CD4-positive, alpha-beta memory T cell (primary cell): ENCODE measurements at regions of chr4 and their contacts with region 1.

Region 1: GRCh38 chr4:128553686-128554515 is 255.6 kb upstream of the JADE1 start:
- DNase-seq: no peak
- H3K4me3 ChIP-seq: peak overlapping the region; percentile 70 to 71
- H3K4me3 Mint-ChIP-seq: peak overlapping the region; percentile 97 to 99 (median 98)
- H3K27ac ChIP-seq: no peak overlapping the region
- H3K27ac Mint-ChIP-seq: peak overlapping the region in 5 of 7 donors; percentile 85 to 98 (median 94)
- H3K4me1 ChIP-seq: peaks cover 8% of the 10 kb centered on the region
- H3K4me1 Mint-ChIP-seq: peaks cover 10 to 17% (median 12%) of the 10 kb centered on the region in 4 donors
- H3K27me3 ChIP-seq: no peaks in the 10 kb centered on the region
- H3K27me3 Mint-ChIP-seq: peaks cover 3 to 7% of the 10 kb centered on the region in 2 donors

Region 2: DNA sequence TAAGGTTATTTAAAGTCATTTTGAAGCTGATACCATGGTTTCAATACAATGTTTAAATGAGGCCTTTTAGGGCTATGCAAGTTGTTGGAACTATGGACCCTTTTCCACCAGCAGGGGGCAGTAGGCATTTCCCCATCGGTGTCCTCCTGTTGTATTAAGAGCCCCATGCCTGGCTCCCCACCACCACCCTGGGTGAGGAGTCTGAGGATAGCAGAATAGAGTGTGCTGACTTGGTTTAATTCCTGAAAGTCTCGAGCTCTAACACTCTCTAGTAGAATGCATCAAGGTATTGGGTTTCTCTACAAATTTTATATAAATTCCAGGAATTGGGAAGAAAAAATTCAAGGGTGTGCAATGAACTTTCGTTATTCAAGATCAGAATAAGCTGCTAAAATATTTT is 20.8 kb after region 1 on chr4:
- CTCF ChIA-PET with region 1: interaction called, 20 read pairs
- POLR2A ChIA-PET with region 1: no interaction called
- intact Hi-C with region 1: no loop called
- DNase-seq: peak; percentile 38 to 52 (median 43)
- H3K4me3 ChIP-seq: no peak overlapping the region
- H3K4me3 Mint-ChIP-seq: no peak overlapping the region
- H3K27ac ChIP-seq: no peak overlapping the region
- H3K27ac Mint-ChIP-seq: no peak overlapping the region
- H3K4me1 ChIP-seq: no peaks in the 10 kb centered on the region
- H3K4me1 Mint-ChIP-seq: no peaks in the 10 kb centered on the region
- H3K27me3 ChIP-seq: no peaks in the 10 kb centered on the region
- H3K27me3 Mint-ChIP-seq: peaks cover 4% of the 10 kb centered on the region in 2 donors

Region 3: DNA sequence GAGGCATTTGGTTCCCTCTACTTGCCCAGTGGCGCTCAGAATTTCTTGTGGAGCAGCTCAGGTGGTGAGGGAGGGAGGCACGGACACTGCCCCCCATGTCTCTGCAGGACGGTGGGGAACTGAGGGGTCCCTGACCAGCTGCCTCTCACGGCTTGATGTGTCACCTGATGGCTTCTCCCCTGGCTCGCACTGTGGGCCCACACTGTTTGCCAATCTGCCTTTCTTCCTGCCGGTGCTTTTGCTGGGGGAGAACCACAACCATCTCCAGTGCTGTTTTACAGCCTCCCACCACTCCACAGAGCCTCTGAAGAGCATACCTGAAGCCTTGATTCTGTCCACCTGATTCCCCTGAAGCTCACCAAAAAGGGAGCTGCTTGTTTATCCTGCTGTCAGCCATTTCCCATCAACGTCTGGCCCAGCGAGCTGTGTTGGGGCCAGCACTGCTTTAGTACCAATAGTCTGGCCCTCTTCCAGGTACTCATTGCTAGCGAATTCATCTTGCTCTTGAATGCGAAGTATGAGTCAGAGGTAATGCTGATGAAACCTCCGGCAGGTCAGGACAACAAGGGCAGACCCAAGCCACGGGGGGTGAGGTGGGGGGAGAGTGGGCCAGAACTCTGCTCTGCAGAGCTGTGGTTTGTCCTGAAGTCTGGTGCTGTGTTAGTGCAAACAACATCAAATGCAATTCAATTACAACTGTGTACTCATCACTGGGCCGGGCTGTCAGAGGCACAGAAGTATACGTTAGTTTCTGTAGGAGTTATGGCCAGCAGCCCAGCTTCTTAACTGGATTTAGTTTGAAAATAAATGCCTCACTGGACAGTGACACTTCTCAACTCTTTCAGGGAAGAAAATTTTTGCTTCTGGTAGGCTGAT is 47.3 kb after region 1 on chr4:
- CTCF ChIA-PET with region 1: no interaction called
- POLR2A ChIA-PET with region 1: no interaction called
- intact Hi-C with region 1: no loop called
- DNase-seq: no peak
- H3K4me3 ChIP-seq: no peak overlapping the region
- H3K4me3 Mint-ChIP-seq: no peak overlapping the region
- H3K27ac ChIP-seq: no peak overlapping the region
- H3K27ac Mint-ChIP-seq: peak overlapping the region in 1 of 7 donors; percentile 48
- H3K4me1 ChIP-seq: no peaks in the 10 kb centered on the region
- H3K4me1 Mint-ChIP-seq: peaks cover 0 to 4% (median 0%) of the 10 kb centered on the region in 4 donors
- H3K27me3 ChIP-seq: peaks cover 4% of the 10 kb centered on the region
- H3K27me3 Mint-ChIP-seq: peaks cover 8 to 9% of the 10 kb centered on the region in 2 donors